A673 (cell line): ENCODE measurements at regions of chr11 and their contacts with region 1.

Region 1: GRCh38 chr11:66579017-66579606 is 10.7 kb upstream of the CTSF start:
- DNase-seq: peak; percentile 84
- H3K4me3 ChIP-seq: no peak overlapping the region
- H3K27ac ChIP-seq: no peak overlapping the region
- H3K4me1 ChIP-seq: no peaks in the 10 kb centered on the region
- H3K27me3 ChIP-seq: no peaks in the 10 kb centered on the region
- CTCF ChIP-seq: peak; percentile 93

Region 2: GRCh38 chr11:65927904-65928397 is 651.2 kb before region 1 on chr11:
- CTCF ChIA-PET with region 1: no interaction called
- POLR2A ChIA-PET with region 1: no interaction called
- intact Hi-C with region 1: no loop called
- DNase-seq: no peak
- H3K4me3 ChIP-seq: no peak overlapping the region
- H3K27ac ChIP-seq: no peak overlapping the region
- H3K4me1 ChIP-seq: no peaks in the 10 kb centered on the region
- H3K27me3 ChIP-seq: no peaks in the 10 kb centered on the region
- CTCF ChIP-seq: no peak

Region 3: DNA sequence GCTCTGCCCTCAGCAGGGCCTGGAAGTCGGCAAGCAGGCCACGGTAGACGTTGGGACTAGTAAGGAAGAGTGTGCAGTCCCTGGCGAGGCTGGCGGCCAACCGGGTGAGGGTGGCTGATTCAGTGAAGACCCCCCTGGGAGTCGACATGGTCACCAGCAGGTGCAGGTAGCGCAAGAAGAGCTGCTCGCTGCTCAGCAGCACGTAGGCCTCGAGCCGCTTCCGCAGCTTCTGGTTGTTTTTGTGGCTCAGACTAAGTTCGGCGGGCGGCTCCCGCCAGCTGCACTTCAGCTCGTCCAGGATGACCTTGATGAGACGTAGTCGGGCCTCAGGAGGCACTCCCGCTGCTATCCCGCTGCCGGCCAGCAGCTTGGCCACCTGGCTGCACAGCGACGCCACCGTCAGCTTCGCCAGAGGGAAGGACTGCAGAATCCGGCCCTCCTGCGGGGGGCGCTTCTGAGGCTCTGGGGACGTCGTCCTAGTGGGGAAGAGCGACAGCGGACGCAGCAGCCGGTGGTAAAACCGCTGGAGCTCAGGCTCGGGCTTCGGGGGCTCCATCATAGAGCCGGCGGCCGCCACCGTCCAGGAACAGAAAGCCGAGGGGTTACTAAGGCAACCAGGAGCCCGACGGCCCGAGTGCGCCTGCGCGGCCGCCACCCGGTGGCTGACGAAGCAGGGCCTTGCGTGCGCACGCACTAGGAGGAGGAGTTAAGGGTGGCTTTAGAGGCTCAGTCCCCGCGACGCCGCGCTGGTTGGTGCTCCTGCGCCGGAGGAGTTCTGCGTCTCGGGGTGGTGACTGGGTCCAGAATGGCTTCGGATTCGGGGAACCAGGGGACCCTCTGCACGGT is 13.6 kb after region 1 on chr11 and contains the starts of genes CCDC87 and CCS:
- CTCF ChIA-PET with region 1: interaction called, 10 read pairs
- POLR2A ChIA-PET with region 1: no interaction called
- intact Hi-C with region 1: no loop called
- DNase-seq: peak; percentile 98
- H3K4me3 ChIP-seq: peak within 1 kb of the TSS; percentile 65
- H3K27ac ChIP-seq: peak within 1 kb of the TSS; percentile 72
- H3K4me1 ChIP-seq: peaks cover 9% of the 10 kb centered on the region
- H3K27me3 ChIP-seq: no peaks in the 10 kb centered on the region
- CTCF ChIP-seq: peak; percentile 70
- total RNA-seq, gene CCDC87: 0.90 and 1.1 TPM in 2 replicates
- total RNA-seq, gene CCS: 43.8 and 56.8 TPM in 2 replicates

Region 4: GRCh38 chr11:66677599-66678375 is 98.7 kb after region 1 on chr11 and contains the start of gene RBM4B:
- CTCF ChIA-PET with region 1: interaction called, 9 read pairs
- POLR2A ChIA-PET with region 1: no interaction called
- intact Hi-C with region 1: loop called (anchors 1 kb)
- DNase-seq: peak; percentile 99
- H3K4me3 ChIP-seq: peak within 1 kb of the TSS; percentile 61
- H3K27ac ChIP-seq: peak within 1 kb of the TSS; percentile 94
- H3K4me1 ChIP-seq: peaks cover 11% of the 10 kb centered on the region
- H3K27me3 ChIP-seq: no peaks in the 10 kb centered on the region
- CTCF ChIP-seq: no peak
- total RNA-seq, gene RBM4B: 35.0 and 40.5 TPM in 2 replicates